Sigmoid colon (tissue), 7 donors: ENCODE measurements at regions of chr3 and their contacts with region 1.

Region 1: DNA sequence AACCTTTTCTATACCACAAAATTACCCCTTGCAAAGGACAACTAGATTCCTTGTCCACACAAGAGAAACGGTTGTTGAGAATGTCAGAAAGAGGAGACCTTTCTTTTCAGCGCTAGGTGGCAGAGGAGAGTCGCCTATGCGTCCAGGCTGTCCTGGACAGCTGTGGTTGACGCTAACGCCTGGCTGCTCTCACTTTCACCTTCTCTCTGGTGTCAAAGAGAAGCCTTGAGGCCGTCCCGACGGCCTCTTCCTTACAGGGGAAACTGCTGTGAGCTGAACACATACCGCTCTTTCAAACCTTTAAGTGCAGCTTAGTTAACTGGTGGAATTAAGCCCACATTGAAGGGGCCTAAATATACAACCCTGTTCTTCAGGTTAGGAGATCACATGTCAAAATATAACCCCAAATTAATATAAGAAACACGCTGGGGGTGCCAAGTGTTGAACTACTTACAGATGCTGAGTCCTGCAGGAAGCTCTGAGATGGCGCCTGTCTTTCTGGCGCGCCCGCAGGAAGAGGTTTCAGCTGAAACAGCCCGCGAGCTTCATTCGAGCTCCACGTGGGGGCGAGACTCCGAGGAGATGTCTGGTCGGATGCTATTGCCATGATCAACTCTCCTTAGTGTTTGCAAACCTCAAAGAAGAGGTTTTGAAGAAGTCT is 26.1 kb upstream of the KBTBD8 start:
- DNase-seq: peak; percentile 85
- H3K4me3 ChIP-seq: peak overlapping the region in 3 of 4 donors; percentile 26 to 36 (median 32)
- H3K27ac ChIP-seq: peak overlapping the region; percentile 19 to 70 (median 50)
- H3K4me1 ChIP-seq: peaks cover 0 to 13% (median 2%) of the 10 kb centered on the region in 4 donors
- H3K27me3 ChIP-seq: no peaks in the 10 kb centered on the region
- CTCF ChIP-seq: peak; percentile 53 to 80 (median 70)
- EP300 ChIP-seq: no peak
- POLR2A ChIP-seq: no peak

Region 2: GRCh38 chr3:67037615-67038014 is 65.6 kb after region 1 on chr3:
- intact Hi-C with region 1: loop called (anchors 2 kb)
- DNase-seq: no peak
- H3K4me3 ChIP-seq: no peak overlapping the region
- H3K27ac ChIP-seq: no peak overlapping the region
- H3K4me1 ChIP-seq: no peaks in the 10 kb centered on the region
- H3K27me3 ChIP-seq: no peaks in the 10 kb centered on the region
- CTCF ChIP-seq: no peak
- EP300 ChIP-seq: no peak
- POLR2A ChIP-seq: no peak

Region 3: DNA sequence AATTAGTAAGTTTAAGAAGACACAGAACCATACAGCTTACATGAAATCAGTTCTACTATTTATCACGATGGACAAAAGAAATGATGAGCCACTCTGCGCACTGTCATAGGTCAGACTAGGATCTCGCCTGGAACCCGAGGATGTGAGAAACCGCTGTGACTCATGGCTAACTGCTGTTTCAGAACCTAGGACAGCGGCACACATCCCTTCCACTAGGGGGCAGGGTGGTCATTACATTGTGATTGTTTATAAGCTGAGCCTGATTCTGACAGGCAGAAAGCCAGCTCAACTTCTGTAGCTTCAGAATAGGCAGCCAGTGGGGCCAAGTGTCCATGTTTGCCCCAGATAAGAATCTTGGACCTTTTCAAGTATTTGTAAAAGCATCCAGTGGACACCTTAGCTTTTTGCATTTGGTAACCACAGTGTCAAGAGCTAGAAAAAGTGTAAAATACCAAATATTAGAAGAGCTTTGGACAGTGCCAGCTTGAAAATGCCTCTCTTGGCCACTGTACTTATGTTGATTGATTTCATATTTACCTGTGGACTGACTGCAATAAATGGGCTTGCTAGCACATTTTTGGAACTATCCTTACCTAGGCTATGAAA is 141.9 kb after region 1 on chr3:
- intact Hi-C with region 1: loop called (anchors 10 kb)
- DNase-seq: peak; percentile 81
- H3K4me3 ChIP-seq: no peak overlapping the region
- H3K27ac ChIP-seq: no peak overlapping the region
- H3K4me1 ChIP-seq: peaks cover 0 to 12% (median 12%) of the 10 kb centered on the region in 4 donors
- H3K27me3 ChIP-seq: no peaks in the 10 kb centered on the region
- CTCF ChIP-seq: peak; percentile 72 to 85 (median 78)
- EP300 ChIP-seq: no peak
- POLR2A ChIP-seq: no peak

Region 4: GRCh38 chr3:67167481-67167880 is 195.5 kb after region 1 on chr3:
- intact Hi-C with region 1: no loop called
- DNase-seq: no peak
- H3K4me3 ChIP-seq: no peak overlapping the region
- H3K27ac ChIP-seq: no peak overlapping the region
- H3K4me1 ChIP-seq: no peaks in the 10 kb centered on the region
- H3K27me3 ChIP-seq: no peaks in the 10 kb centered on the region
- CTCF ChIP-seq: no peak
- EP300 ChIP-seq: no peak
- POLR2A ChIP-seq: no peak

Region 5: DNA sequence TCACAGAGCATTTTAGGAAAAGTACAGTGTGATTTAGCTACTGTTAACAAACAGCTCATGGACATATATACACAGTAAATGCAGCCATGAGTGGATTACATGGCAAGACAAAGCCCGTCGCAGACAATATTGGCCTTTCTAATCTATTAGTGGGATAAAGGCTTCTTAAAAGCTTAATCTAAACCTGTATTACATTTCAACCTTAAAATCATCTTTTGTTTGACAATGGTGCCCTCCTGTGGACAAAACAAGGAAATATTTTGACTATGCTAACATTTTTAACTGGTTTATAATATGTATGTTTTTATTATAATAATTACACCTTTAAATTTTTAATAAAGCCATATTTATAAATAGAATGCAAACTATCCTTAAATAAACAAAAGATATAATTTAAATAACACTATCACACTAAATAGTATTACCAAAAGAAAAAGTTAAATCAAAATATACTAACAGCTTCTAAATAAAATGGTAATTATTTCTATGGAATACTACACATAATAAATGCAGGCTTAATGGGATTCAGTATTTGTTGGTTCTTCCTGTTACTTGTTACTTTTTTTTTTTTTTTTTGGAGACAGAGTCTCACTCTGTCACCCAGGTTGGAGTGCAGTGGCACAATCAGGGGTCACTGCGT is 1921.7 kb after region 1 on chr3:
- intact Hi-C with region 1: loop called (anchors 5 kb)
- DNase-seq: no peak
- H3K4me3 ChIP-seq: no peak overlapping the region
- H3K27ac ChIP-seq: no peak overlapping the region
- H3K4me1 ChIP-seq: peaks cover 0 to 16% (median 12%) of the 10 kb centered on the region in 4 donors
- H3K27me3 ChIP-seq: no peaks in the 10 kb centered on the region
- CTCF ChIP-seq: peak in 2 of 4 experiments; percentile 33 to 52
- EP300 ChIP-seq: no peak
- POLR2A ChIP-seq: no peak

Region 6: DNA sequence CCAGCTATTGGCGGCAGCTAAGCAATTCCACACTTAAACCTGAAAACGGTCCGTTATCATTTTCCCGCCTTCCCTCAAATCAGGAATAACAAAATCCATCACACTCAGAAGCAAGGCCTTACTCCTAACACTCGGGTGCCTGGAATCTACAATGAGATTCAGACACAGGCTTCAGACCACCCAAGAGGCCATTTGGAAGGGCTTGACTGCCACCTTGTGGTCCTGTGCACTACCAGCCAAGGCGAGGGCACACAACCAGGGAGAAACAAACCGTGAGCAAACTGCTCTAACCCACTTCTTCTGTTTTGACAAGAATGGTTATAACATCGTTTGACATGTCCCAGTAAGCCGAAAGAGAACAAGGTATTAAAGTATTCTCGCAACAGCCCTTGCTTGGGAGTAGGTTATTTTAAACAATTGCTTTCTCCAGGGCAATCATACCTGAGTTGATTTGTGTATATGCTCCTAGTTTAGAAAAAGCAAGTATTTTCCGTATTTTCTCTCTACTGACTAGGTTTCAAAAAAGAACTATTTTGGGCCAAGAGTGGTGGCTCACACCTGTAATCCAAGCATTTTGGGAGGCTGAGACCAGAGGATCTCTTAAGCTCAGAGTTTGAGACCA is 2000.4 kb after region 1 on chr3:
- intact Hi-C with region 1: loop called (anchors 10 kb)
- DNase-seq: peak; percentile 67
- H3K4me3 ChIP-seq: no peak overlapping the region
- H3K27ac ChIP-seq: no peak overlapping the region
- H3K4me1 ChIP-seq: no peaks in the 10 kb centered on the region
- H3K27me3 ChIP-seq: no peaks in the 10 kb centered on the region
- CTCF ChIP-seq: peak; percentile 26 to 68 (median 56)
- EP300 ChIP-seq: no peak
- POLR2A ChIP-seq: no peak